Thyroid gland (tissue), 4 donors: ENCODE measurements at regions of chr21 and their contacts with region 1.

Region 1: DNA sequence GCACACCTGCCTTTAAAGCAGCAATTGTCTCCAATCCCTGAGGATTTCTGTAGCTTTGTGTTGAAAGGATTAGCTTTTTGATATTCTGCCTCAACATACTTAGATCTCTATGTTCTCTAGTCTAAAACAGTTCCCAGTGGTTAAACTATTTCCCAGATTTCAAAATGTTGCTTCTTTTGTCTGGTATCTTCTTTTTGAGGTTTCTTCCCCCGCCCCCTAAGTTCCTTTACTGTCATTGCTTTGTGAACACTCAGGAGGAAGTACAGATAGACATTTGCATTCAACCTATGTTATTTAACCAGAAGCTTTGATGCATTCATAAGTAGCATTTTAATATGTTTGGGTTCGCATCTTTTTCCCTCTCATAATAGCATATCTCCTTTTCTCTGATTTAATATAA is 33.5 kb downstream of the CYYR1 start:
- DNase-seq: no peak
- H3K4me3 ChIP-seq: no peak overlapping the region
- H3K27ac ChIP-seq: no peak overlapping the region
- H3K4me1 ChIP-seq: no peaks in the 10 kb centered on the region
- H3K27me3 ChIP-seq: no peaks in the 10 kb centered on the region
- CTCF ChIP-seq: no peak
- POLR2A ChIP-seq: no peak

Region 2: GRCh38 chr21:25895565-25896205 is 643.9 kb before region 1 on chr21:
- intact Hi-C with region 1: no loop called
- DNase-seq: no peak
- H3K4me3 ChIP-seq: no peak overlapping the region
- H3K27ac ChIP-seq: no peak overlapping the region
- H3K4me1 ChIP-seq: peaks cover 0 to 6% of the 10 kb centered on the region in 2 donors
- H3K27me3 ChIP-seq: no peaks in the 10 kb centered on the region
- CTCF ChIP-seq: peak in 4 of 6 experiments; percentile 26 to 48 (median 38)
- POLR2A ChIP-seq: no peak

Region 3: DNA sequence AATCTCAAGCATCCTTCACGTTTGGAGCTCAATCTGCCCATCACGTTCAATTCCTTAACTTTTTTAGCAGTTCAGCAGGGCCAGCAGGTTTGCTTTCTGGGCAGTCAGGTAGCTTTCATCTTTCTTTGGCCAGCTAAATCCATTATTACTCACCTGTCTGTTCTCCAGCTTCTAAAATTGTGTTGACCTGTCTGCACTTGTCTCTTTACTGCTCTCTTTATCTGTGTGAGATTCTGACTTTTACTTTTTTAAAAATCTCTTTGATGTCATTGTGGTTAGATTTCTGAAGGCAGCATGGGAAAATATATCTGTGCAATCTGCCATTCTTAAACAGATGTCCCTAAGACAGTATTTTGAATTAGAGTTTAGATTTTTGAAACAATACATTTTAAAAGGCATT is 58.4 kb after region 1 on chr21:
- intact Hi-C with region 1: loop called (anchors 10 kb)
- DNase-seq: no peak
- H3K4me3 ChIP-seq: no peak overlapping the region
- H3K27ac ChIP-seq: no peak overlapping the region
- H3K4me1 ChIP-seq: no peaks in the 10 kb centered on the region
- H3K27me3 ChIP-seq: no peaks in the 10 kb centered on the region
- CTCF ChIP-seq: no peak
- POLR2A ChIP-seq: no peak